Testis (tissue), 5 donors: ENCODE measurements at regions of chr18 and their contacts with region 1.

Region 1: GRCh38 chr18:9055185-9055584 is 47.3 kb upstream of the NDUFV2 start:
- DNase-seq: no peak
- H3K4me3 ChIP-seq: no peak overlapping the region
- H3K27ac ChIP-seq: no peak overlapping the region
- H3K4me1 ChIP-seq: peaks cover 4% of the 10 kb centered on the region
- H3K27me3 ChIP-seq: no peaks in the 10 kb centered on the region
- CTCF ChIP-seq: no peak
- POLR2A ChIP-seq: no peak

Region 2: DNA sequence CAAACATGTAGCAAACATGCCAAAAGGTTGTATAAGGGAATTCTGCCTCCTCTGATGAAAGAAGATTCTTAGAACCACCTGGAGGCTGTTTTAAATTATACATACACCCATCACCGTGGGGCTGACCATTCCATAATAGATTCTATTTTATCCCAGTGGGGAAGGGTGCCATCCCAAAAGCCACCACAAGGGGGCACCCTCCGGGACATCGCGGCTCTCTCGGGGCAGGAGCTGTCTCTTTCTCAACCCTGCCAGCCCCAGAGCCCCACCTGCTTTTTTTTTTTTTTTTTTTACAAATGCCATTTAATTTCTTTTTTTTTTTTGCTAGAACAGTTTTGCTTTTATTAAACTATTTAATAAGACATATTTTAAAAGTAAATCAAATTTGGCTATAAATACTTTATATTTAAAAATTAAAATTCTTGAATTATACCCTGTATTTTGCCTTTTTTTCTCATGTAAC is 358.4 kb before region 1 on chr18:
- intact Hi-C with region 1: loop called (anchors 10 kb)
- DNase-seq: peak; percentile 87
- H3K4me3 ChIP-seq: no peak overlapping the region
- H3K27ac ChIP-seq: no peak overlapping the region
- H3K4me1 ChIP-seq: no peaks in the 10 kb centered on the region
- H3K27me3 ChIP-seq: no peaks in the 10 kb centered on the region
- CTCF ChIP-seq: peak; percentile 80 to 96 (median 83)
- POLR2A ChIP-seq: no peak

Region 3: GRCh38 chr18:8998481-8999217 is 56.5 kb before region 1 on chr18:
- intact Hi-C with region 1: no loop called
- DNase-seq: no peak
- H3K4me3 ChIP-seq: no peak overlapping the region
- H3K27ac ChIP-seq: no peak overlapping the region
- H3K4me1 ChIP-seq: no peaks in the 10 kb centered on the region
- H3K27me3 ChIP-seq: no peaks in the 10 kb centered on the region
- CTCF ChIP-seq: no peak
- POLR2A ChIP-seq: no peak

Region 4: DNA sequence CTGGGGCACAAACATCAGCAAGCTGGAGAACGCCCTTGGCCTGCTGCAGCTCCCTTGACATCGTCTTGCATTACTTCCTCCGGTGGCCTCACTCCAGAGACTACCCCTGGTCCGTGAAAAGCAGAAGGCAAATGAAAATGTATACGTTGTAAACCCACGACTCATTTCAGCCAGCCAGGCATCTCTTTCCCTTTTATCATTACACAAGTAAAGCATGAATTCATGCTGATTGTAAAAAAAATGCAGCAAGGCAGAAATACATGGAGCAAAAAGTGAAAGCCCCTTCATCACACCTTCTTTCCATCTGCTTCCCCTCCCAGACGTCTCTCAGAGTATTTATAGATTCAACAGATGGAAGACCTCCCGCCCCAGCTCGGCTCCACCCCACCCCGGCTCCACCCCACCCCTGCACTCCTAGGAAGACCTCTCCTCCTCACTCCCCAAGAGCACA is 378.5 kb after region 1 on chr18:
- intact Hi-C with region 1: no loop called
- DNase-seq: no peak
- H3K4me3 ChIP-seq: peak overlapping the region in 1 of 2 donors; percentile 26
- H3K27ac ChIP-seq: no peak overlapping the region
- H3K4me1 ChIP-seq: peaks cover 5% of the 10 kb centered on the region
- H3K27me3 ChIP-seq: no peaks in the 10 kb centered on the region
- CTCF ChIP-seq: no peak
- POLR2A ChIP-seq: no peak